ENCODE measurements at regions of chr13 and their contacts with region 1.

Region 1: GRCh38 chr13:41942462-41943094 is 18.3 kb downstream of the VWA8 start:
- DNase-seq: no peak
- H3K4me3 ChIP-seq: no peak overlapping the region
- H3K27ac ChIP-seq: no peak overlapping the region
- H3K4me1 ChIP-seq: peaks cover 0 to 3% (median 2%) of the 10 kb centered on the region in 4 experiments; a peak in 1 of 7 replicates
- H3K27me3 ChIP-seq: no peaks in the 10 kb centered on the region
- CTCF ChIP-seq: peak; percentile 12 to 64 (median 37); a peak in 3 of 4 replicates
- EP300 ChIP-seq: no peak
- POLR2A ChIP-seq: no peak
- RAD21 ChIP-seq: peak; percentile 49 to 64

Region 2: DNA sequence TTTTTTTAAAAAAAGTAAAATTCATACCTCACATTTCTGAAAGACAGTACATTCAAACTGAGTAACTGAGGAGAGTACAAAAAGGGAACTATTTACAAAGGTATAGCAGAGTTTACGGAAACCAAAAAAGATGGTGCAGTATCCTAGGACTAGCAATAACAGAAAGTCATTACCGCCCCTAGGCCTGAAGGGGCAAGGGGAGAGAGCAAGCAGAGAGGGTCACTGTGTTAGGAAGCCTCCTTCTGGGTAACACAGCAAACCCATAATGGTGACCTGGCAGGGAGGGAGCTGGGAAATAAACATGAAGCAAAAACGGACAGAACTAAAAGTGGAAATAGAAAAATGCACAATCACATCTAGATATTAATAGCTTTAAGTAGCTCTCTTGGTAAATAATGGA is 10.2 kb after region 1 on chr13:
- CTCF ChIA-PET with region 1: interaction called, 15 read pairs
- POLR2A ChIA-PET with region 1: interaction called, 3 read pairs
- DNase-seq: no peak
- H3K4me3 ChIP-seq: no peak overlapping the region
- H3K27ac ChIP-seq: no peak overlapping the region
- H3K4me1 ChIP-seq: no peaks in the 10 kb centered on the region
- H3K27me3 ChIP-seq: peaks cover 0 to 1% (median 0%) of the 10 kb centered on the region in 4 experiments; a peak in 1 of 7 replicates
- CTCF ChIP-seq: no peak
- EP300 ChIP-seq: no peak
- POLR2A ChIP-seq: no peak
- RAD21 ChIP-seq: no peak